Mammary epithelial cell (primary cell): ENCODE measurements at regions of chr18 and their contacts with region 1.

Region 1: GRCh38 chr18:70373042-70373519 is 84.2 kb downstream of the SOCS6 start:
- DNase-seq: peak; percentile 99
- H3K4me3 ChIP-seq: no peak overlapping the region
- H3K27ac ChIP-seq: peak overlapping the region; percentile 92
- H3K4me1 ChIP-seq: peaks cover 29% of the 10 kb centered on the region
- H3K27me3 ChIP-seq: no peaks in the 10 kb centered on the region
- CTCF ChIP-seq: no peak

Region 2: GRCh38 chr18:70308555-70309294 is 64.4 kb before region 1 on chr18:
- CTCF ChIA-PET with region 1: no interaction called
- dilution Hi-C with region 1: loop called (anchors 5 kb)
- in situ Hi-C with region 1: no loop called
- intact Hi-C with region 1: no loop called
- DNase-seq: no peak
- H3K4me3 ChIP-seq: no peak overlapping the region
- H3K27ac ChIP-seq: no peak overlapping the region
- H3K4me1 ChIP-seq: no peaks in the 10 kb centered on the region
- H3K27me3 ChIP-seq: no peaks in the 10 kb centered on the region
- CTCF ChIP-seq: no peak

Region 3: GRCh38 chr18:70384181-70384790 is 11.2 kb after region 1 on chr18:
- CTCF ChIA-PET with region 1: no interaction called
- dilution Hi-C with region 1: no loop called
- in situ Hi-C with region 1: no loop called
- intact Hi-C with region 1: loop called (anchors 1 kb)
- DNase-seq: peak; percentile 99
- H3K4me3 ChIP-seq: no peak overlapping the region
- H3K27ac ChIP-seq: peak overlapping the region; percentile 85
- H3K4me1 ChIP-seq: peaks cover 27% of the 10 kb centered on the region
- H3K27me3 ChIP-seq: no peaks in the 10 kb centered on the region
- CTCF ChIP-seq: no peak

Region 4: GRCh38 chr18:70421471-70422390 is 48.6 kb after region 1 on chr18:
- CTCF ChIA-PET with region 1: no interaction called
- dilution Hi-C with region 1: loop called (anchors 5 kb)
- in situ Hi-C with region 1: no loop called
- intact Hi-C with region 1: no loop called
- DNase-seq: peak; percentile 96
- H3K4me3 ChIP-seq: no peak overlapping the region
- H3K27ac ChIP-seq: peak overlapping the region; percentile 95
- H3K4me1 ChIP-seq: peaks cover 45% of the 10 kb centered on the region
- H3K27me3 ChIP-seq: no peaks in the 10 kb centered on the region
- CTCF ChIP-seq: no peak

Region 5: DNA sequence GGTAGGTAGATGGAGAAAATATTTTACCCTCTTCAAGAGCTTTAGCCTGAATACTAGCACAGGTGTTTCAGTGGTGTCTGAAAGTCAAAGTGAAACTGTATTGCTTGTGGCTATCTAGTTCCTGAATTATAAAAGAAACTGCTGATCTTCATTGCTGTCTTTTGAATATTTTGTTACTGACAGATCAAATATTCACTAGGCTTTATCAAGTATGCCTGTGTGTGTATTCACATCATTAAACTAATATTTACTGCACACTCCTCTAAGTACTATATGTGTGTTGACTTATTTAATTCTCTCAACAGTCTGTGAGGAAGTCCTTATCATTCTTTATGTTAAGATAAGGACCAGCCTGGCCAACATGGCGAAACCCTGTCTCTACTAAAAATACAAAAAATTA is 55.4 kb after region 1 on chr18:
- CTCF ChIA-PET with region 1: interaction called, 11 read pairs
- dilution Hi-C with region 1: loop called (anchors 5 kb)
- in situ Hi-C with region 1: no loop called
- intact Hi-C with region 1: no loop called
- DNase-seq: no peak
- H3K4me3 ChIP-seq: no peak overlapping the region
- H3K27ac ChIP-seq: no peak overlapping the region
- H3K4me1 ChIP-seq: peaks cover 23% of the 10 kb centered on the region
- H3K27me3 ChIP-seq: no peaks in the 10 kb centered on the region
- CTCF ChIP-seq: no peak

Region 6: GRCh38 chr18:70535041-70535440 is 162.0 kb after region 1 on chr18:
- CTCF ChIA-PET with region 1: no interaction called
- dilution Hi-C with region 1: no loop called
- in situ Hi-C with region 1: no loop called
- intact Hi-C with region 1: no loop called
- DNase-seq: no peak
- H3K4me3 ChIP-seq: no peak overlapping the region
- H3K27ac ChIP-seq: no peak overlapping the region
- H3K4me1 ChIP-seq: no peaks in the 10 kb centered on the region
- H3K27me3 ChIP-seq: peaks cover 1% of the 10 kb centered on the region
- CTCF ChIP-seq: no peak